Upper lobe of right lung (tissue), 1 donor: ENCODE measurements at regions of chr3 and their contacts with region 1.

Region 1: GRCh38 chr3:160163229-160163878 is 61.9 kb upstream of the C3orf80 start:
- DNase-seq: no peak
- ATAC-seq: no peak
- H3K4me3 ChIP-seq: no peak overlapping the region
- H3K27ac ChIP-seq: no peak overlapping the region
- H3K4me1 ChIP-seq: no peaks in the 10 kb centered on the region
- H3K27me3 ChIP-seq: peaks cover 7% of the 10 kb centered on the region
- CTCF ChIP-seq: peak; percentile 49

Region 2: DNA sequence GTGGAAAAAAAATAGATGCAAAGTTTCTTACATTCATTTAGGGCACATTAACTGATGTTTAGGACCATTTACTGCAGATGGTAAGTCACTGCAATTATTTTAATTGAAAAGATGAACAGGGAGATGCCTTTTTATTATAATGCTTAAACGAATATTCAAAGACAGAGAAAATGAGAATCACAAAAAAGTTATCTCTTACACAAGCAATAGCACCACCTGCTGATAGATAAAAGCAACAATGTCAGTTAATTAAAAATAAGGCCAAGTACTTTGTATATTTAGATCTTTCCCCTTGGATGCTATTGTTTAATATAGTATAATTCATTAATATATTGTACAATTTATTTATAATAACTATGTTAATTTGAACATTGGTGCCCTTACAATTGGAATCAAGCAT is 179.8 kb after region 1 on chr3:
- intact Hi-C with region 1: loop called (anchors 5 kb)
- DNase-seq: no peak
- ATAC-seq: no peak
- H3K4me3 ChIP-seq: no peak overlapping the region
- H3K27ac ChIP-seq: no peak overlapping the region
- H3K4me1 ChIP-seq: no peaks in the 10 kb centered on the region
- H3K27me3 ChIP-seq: no peaks in the 10 kb centered on the region
- CTCF ChIP-seq: peak; percentile 33